ENCODE measurements at regions of chr20 and their contacts with region 1.

Region 1: DNA sequence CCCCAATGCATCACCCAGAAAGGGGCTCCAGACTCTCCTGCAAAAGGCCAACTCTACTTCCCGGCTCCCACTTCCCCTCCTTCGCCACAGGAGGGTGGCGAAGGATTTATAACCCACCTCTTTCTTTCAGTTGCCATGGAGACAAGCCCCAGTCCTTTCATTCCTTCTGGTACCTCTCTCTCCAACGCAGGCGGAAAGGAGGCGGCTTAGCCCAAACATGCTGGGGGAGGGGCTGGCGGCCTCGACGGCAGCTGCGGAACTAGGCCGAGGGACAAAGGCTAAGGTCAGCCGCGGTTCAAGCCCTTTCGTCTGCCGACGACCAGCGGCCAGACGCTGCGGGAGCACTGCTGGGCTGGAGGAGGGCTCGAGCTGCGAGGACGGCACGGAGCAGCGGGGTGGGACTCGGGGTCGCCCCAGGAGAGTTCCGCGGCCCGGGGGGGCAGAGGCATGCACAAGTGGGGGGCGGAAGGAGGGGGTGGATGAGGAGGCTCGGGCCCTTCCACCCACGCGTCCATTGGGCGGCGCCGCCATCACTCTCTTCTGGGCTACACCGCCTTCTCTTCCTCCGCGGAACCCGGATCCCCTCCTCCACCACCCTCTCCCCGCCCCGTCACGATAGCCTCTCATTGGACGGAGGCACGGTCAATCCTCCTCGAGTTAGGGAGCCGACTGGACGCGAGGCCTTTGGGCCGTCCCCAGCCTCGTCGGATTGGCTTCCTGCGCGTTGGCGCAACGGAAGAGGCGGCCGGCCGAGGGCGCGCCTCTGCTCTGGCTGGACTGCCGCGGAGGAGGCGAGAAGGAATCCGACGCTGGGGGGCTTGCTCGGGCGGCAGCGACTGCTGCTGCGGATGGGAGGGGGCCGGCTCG is at the start of gene PANK2:
- DNase-seq: peak; percentile 93 to 98 (median 95)
- ATAC-seq: peak; percentile 97
- H3K4me3 ChIP-seq: peak within 1 kb of the TSS; percentile 95
- H3K27ac ChIP-seq: peak within 1 kb of the TSS; percentile 94
- H3K4me1 ChIP-seq: peaks cover 9 to 11% of the 10 kb centered on the region in 2 experiments; a peak in 4 of 5 replicates
- H3K27me3 ChIP-seq: no peaks in the 10 kb centered on the region
- CTCF ChIP-seq: peak; percentile 35 to 59 (median 42); a peak in 5 of 6 replicates
- EP300 ChIP-seq: no peak
- POLR2A ChIP-seq: peak; percentile 75
- RAD21 ChIP-seq: peak in 1 of 2 experiments; percentile 46; a peak in 2 of 4 replicates
- polyA plus RNA-seq, gene PANK2: 14.9 to 16.3 TPM

Region 2: DNA sequence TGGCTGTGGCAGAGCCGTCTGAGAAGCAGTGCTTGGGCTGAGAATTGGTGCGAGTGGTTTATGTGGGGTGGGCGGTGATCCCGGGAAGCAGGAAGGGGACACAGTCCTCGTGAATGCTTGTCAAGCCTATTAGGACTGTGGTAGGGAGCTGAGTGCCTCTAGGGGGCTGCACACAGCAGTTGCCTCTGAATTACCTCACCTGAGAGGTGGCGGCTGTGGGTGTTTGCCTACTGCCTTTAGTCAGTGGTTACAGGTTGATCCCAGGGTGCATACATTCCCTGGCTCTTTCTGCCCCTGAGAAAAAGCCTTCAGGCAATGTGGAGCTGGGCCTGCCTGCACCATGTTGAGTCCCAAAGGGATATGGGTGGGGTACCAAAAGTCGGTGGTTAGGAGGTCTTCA is 63.3 kb before region 1 on chr20:
- CTCF ChIA-PET with region 1: no interaction called
- POLR2A ChIA-PET with region 1: no interaction called
- in situ Hi-C with region 1: no loop called
- intact Hi-C with region 1: no loop called
- DNase-seq: no peak
- ATAC-seq: peak; percentile 45
- H3K4me3 ChIP-seq: no peak overlapping the region
- H3K27ac ChIP-seq: no peak overlapping the region
- H3K4me1 ChIP-seq: peaks cover 2 to 4% of the 10 kb centered on the region in 2 experiments; a peak in 3 of 5 replicates
- H3K27me3 ChIP-seq: no peaks in the 10 kb centered on the region
- CTCF ChIP-seq: 0 out of 6 replicates have a peak, but pooled peaks of 1 of the 3 experiments have one; percentile 4
- EP300 ChIP-seq: no peak
- POLR2A ChIP-seq: no peak
- RAD21 ChIP-seq: no peak

Region 3: DNA sequence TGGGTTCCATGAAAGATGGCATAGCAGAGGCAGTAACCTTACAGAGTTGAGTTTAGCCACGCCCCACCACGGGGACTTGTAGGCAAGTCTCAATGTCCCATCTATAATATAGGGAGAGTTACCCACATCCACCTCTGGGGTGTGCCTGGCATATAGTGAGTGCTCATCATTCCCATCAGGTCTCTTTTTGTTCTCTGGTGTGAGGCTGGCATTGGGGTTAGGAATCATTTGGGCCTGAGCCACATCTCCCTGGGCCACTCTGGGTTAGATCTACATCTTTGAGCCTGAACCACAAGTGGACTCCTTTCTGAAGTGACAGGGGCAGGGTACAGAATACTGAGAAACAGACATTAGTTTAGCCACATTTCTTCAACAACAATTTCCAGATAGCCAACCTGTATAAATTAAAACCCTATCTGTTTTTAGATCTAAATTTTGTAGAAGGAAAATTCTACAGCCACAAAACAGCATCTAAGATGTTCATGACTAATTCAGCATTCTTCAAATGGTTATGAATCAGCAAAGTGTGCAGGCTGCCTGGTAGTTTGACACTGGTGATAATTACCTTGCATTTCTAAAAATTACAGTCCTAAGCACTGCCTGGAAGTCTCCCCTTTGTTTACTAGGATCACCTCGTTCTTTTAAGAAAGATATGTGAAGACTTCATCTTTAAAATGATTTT is 106.4 kb after region 1 on chr20:
- CTCF ChIA-PET with region 1: no interaction called
- POLR2A ChIA-PET with region 1: no interaction called
- in situ Hi-C with region 1: no loop called
- intact Hi-C with region 1: no loop called
- DNase-seq: peak in 3 of 4 experiments; percentile 14 to 43 (median 18)
- ATAC-seq: peak; percentile 79
- H3K4me3 ChIP-seq: no peak overlapping the region
- H3K27ac ChIP-seq: peak overlapping the region; percentile 57; the same call in 1 of the 3 replicates
- H3K4me1 ChIP-seq: peaks cover 0 to 20% of the 10 kb centered on the region in 2 experiments; a peak in 2 of 5 replicates
- H3K27me3 ChIP-seq: no peaks in the 10 kb centered on the region
- CTCF ChIP-seq: no peak
- EP300 ChIP-seq: no peak; the same call in 1 of the 2 replicates
- POLR2A ChIP-seq: no peak
- RAD21 ChIP-seq: no peak

Region 4: DNA sequence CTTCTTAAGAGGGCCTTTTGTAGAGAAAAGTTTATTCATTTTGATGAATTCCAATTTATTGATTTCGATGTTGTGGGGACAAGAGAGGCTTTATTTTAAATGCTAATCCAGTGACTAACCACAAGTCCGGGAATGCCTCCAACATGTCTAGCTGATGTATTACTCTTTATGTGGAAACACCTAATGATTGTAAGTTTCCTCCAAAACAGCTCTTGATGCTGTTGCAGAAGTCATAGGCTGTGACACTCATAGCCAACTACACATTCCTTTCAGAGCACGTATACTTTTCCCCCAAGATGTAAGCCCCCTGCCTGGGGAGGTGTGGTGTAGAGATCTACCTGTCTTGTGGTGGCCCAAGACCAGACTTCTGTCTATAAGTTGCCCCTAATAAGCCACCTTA is 187.8 kb after region 1 on chr20:
- CTCF ChIA-PET with region 1: no interaction called
- POLR2A ChIA-PET with region 1: no interaction called
- in situ Hi-C with region 1: no loop called
- intact Hi-C with region 1: loop called (anchors 2 kb)
- DNase-seq: no peak
- ATAC-seq: no peak
- H3K4me3 ChIP-seq: no peak overlapping the region
- H3K27ac ChIP-seq: peak overlapping the region; percentile 28; the same call in 1 of the 3 replicates
- H3K4me1 ChIP-seq: peaks cover 14 to 55% of the 10 kb centered on the region in 2 experiments
- H3K27me3 ChIP-seq: no peaks in the 10 kb centered on the region
- CTCF ChIP-seq: no peak
- EP300 ChIP-seq: no peak
- POLR2A ChIP-seq: no peak
- RAD21 ChIP-seq: no peak

Region 5: GRCh38 chr20:4091490-4092479 is 202.9 kb after region 1 on chr20:
- CTCF ChIA-PET with region 1: no interaction called
- POLR2A ChIA-PET with region 1: no interaction called
- in situ Hi-C with region 1: no loop called
- intact Hi-C with region 1: loop called (anchors 5 kb)
- DNase-seq: peak; percentile 63 to 74 (median 70)
- ATAC-seq: peak; percentile 90
- H3K4me3 ChIP-seq: no peak overlapping the region
- H3K27ac ChIP-seq: peak overlapping the region; percentile 62; the same call in 2 of the 3 replicates
- H3K4me1 ChIP-seq: peaks cover 7 to 20% of the 10 kb centered on the region in 2 experiments
- H3K27me3 ChIP-seq: no peaks in the 10 kb centered on the region
- CTCF ChIP-seq: peak; percentile 72 to 77 (median 75)
- EP300 ChIP-seq: no peak
- POLR2A ChIP-seq: no peak
- RAD21 ChIP-seq: peak; percentile 43 to 64; a peak in 3 of 4 replicates

Measured in K562 (cell line).